Tibial artery (tissue), 4 donors: ENCODE measurements at regions of chr9 and their contacts with region 1.

Region 1: DNA sequence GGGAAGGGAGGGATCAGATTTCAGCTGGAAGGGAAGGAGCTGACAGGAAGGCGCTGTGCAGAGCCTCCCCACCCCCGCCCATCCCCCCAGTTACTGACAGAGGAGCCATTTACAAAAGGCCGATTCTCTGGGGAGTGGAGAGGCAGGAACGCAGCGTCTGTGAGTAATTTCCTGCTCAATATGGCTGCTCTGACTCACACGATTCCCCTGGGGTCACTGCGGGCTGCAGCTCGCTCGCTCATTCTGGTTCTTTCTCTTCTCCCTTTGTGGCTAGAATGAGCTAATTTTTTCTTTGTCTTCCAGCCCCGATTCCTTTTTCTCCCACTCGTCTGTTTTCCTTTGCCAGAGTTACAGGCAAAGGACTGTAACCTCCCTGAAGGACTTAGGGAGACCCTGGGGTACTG is 28.8 kb downstream of the PTPA start:
- DNase-seq: peak; percentile 98 to 99
- H3K4me3 ChIP-seq: peak overlapping the region; percentile 45 to 57
- H3K27ac ChIP-seq: peak overlapping the region; percentile 91 to 99
- H3K4me1 ChIP-seq: peaks cover 18 to 79% (median 74%) of the 10 kb centered on the region in 4 donors
- H3K27me3 ChIP-seq: no peaks in the 10 kb centered on the region
- CTCF ChIP-seq: no peak

Region 2: GRCh38 chr9:129333953-129334724 is 194.1 kb after region 1 on chr9:
- intact Hi-C with region 1: loop called (anchors 10 kb)
- DNase-seq: peak; percentile 93 to 96
- H3K4me3 ChIP-seq: peak overlapping the region in 1 of 2 donors; percentile 28
- H3K27ac ChIP-seq: peak overlapping the region; percentile 87 to 92
- H3K4me1 ChIP-seq: peaks cover 16 to 83% (median 55%) of the 10 kb centered on the region in 4 donors
- H3K27me3 ChIP-seq: no peaks in the 10 kb centered on the region
- CTCF ChIP-seq: peak in 1 of 2 experiments; percentile 15

Region 3: GRCh38 chr9:129487642-129488409 is 347.8 kb after region 1 on chr9:
- intact Hi-C with region 1: loop called (anchors 5 kb)
- DNase-seq: peak; percentile 80 to 88
- H3K4me3 ChIP-seq: peak overlapping the region; percentile 53 to 64
- H3K27ac ChIP-seq: peak overlapping the region; percentile 100
- H3K4me1 ChIP-seq: peaks cover 0 to 97% (median 84%) of the 10 kb centered on the region in 4 donors
- H3K27me3 ChIP-seq: no peaks in the 10 kb centered on the region
- CTCF ChIP-seq: no peak